ENCODE measurements at regions of chr1 and their contacts with region 1.

Region 1: DNA sequence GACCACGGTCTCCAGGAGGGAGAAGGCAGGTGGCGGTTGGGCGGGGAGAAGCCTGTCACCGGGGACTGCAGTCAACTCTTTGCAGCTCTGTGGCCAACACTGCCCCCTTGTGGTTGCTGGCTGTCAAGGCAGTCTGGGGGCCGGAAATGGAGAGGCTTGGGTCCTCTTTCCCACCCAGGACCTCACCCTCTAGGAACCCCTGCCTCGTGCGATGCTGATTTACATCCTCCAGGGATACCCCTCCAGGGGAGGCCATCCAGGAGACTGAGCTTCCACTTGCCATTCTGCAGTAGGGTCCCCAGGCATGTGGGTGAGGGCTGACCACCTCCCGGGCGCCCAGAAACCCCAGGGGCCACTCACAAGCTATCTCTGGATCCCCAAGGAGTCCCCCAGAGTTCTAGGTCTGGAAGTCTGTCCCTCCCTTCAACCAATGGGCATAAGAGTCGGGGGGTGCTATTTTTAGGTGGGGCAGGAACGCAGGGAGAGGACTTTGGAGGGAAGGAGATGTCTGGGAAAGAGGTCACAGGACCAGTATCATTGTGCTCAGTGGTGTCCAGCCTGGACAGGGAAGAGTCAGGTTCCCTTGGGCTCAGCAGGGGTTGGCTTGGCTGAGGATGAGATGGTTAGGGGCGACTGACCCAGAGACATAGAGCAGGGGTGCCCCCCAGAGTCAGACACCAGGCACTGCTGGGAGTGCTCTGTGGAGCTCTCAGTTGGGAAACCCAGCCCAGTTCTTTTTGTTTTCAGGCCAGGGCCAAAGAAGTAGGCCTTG is 7.1 kb upstream of the GPR61 start:
- DNase-seq: peak; percentile 96
- H3K4me3 Mint-ChIP-seq: peak overlapping the region; percentile 57
- H3K27ac Mint-ChIP-seq: peak overlapping the region; percentile 81
- H3K4me1 Mint-ChIP-seq: peaks cover 22% of the 10 kb centered on the region
- H3K27me3 Mint-ChIP-seq: no peaks in the 10 kb centered on the region

Region 2: DNA sequence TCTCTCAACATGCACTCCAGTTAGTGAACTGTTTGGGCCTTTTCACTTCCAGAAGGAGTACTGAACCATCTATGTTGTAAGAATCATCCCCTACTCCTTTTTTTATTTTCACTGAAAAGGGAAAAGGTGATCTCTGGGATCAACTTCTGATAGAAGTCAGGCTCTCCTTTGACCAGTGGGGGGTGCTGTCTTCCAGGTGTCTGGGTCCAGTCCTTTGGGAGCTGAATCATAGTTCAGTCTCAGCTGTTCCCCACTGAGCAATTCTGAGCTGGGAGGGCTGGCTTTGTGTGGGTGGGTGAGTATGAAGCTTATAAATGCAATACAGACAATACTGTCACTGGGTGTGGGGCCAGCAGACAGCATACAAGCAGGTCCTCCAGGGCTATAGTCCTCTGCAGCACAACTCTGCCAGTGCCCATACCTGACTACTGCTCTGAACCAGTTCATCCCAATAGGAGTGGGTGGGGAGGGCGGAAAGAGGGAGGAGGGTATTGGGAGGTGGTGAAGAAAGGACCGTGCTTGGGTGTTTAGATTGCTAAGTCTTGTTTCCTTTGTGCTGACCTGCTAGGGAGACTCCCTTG is 331.3 kb before region 1 on chr1:
- CTCF ChIA-PET with region 1: interaction called, 10 read pairs
- intact Hi-C with region 1: loop called (anchors 1 kb)
- DNase-seq: peak; percentile 86
- H3K4me3 Mint-ChIP-seq: no peak overlapping the region
- H3K27ac Mint-ChIP-seq: no peak overlapping the region
- H3K4me1 Mint-ChIP-seq: peaks cover 17% of the 10 kb centered on the region
- H3K27me3 Mint-ChIP-seq: no peaks in the 10 kb centered on the region

Region 3: DNA sequence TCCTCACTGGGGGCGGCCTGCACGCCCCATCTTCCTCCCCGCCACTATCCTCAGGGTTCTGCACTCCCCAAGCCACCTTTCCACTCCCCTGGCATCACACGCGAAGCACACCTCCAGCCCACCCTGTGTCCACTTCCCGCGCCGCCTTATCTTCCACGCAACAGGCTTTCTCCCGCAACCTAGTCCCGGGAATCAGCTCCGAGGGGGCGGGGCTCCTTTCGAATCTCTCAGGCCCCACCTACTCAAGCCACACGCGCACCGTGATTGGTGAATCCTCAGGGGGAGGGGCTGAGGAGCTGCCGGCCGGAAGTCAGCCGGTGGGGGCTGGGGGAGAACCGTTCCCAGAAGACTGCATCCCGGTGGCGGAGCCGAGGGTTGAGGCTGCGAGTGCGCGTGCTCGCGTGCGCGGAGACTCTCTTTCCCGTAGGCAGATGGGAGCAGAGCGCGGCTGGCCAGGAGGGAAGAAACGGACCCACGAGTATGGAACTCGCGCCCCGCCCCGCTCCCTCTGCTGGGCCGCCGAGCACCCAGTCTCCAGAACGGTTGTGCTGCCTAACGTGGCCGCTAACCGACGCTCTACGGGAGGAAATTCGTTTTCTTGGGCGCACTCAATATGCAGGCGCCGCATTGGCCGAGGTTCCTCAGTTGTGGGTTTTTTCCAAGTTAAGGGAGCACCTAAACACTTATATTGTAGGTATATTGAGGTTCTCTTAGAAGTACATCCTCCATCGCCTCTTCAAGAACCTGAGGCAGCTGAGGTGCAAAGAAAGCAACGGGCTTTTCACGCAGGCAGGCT is 249.4 kb before region 1 on chr1 and contains the start of gene PSRC1:
- CTCF ChIA-PET with region 1: interaction called, 42 read pairs
- intact Hi-C with region 1: no loop called
- DNase-seq: peak; percentile 94
- H3K4me3 Mint-ChIP-seq: peak within 1 kb of the TSS; percentile 94
- H3K27ac Mint-ChIP-seq: peak within 1 kb of the TSS; percentile 89
- H3K4me1 Mint-ChIP-seq: peaks cover 6% of the 10 kb centered on the region
- H3K27me3 Mint-ChIP-seq: no peaks in the 10 kb centered on the region
- total RNA-seq, gene PSRC1: 19.3 to 21.5 TPM

Region 4: DNA sequence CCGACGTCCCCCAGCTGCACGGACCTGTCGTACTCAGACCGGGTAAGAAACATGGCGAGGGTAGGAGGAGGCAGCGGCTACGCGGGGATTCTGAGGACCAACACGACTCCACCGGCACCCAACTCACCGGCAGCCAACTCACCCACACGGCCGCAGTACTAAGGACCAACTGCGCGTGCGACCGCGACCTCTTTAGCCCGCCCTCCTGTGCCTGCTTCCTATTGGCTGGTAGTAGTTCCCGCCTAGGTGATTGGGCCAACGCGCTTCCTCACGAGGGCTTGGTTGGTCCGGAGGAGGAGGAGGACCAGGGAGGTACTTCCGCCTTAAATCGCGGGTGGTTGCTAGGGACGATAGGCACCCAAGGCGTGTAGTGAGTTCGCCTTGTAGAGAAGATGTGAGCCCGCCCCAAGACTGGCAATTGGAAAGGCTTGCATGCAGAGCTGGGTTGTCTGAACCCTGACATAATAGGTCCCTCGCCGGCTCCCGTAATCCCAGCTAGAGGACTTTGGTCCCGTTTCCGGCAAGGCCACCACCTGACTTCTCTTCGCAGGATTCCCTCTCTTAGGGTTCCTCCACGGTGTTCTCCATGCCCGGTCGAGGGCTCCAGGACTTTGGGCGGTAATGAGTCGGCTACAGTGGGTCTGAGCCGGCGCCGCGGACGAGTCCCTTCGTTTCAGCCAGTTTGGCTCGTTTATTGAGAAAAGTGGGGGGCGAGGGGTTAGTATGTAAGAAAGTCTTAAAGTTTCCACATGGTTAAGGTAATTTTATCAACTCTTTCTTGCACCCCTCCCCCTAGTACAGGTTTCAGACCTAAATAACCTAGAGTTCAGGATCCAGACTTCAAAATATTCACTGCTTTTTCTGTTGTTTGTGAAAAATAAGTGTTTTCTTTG is 106.0 kb before region 1 on chr1 and contains the start of gene PSMA5:
- CTCF ChIA-PET with region 1: interaction called, 34 read pairs
- intact Hi-C with region 1: loop called (anchors 1 kb)
- DNase-seq: peak; percentile 98
- H3K4me3 Mint-ChIP-seq: peak within 1 kb of the TSS; percentile 94
- H3K27ac Mint-ChIP-seq: peak within 1 kb of the TSS; percentile 97
- H3K4me1 Mint-ChIP-seq: peaks cover 33% of the 10 kb centered on the region
- H3K27me3 Mint-ChIP-seq: no peaks in the 10 kb centered on the region
- total RNA-seq, gene PSMA5: 181 to 202 TPM

Region 5: DNA sequence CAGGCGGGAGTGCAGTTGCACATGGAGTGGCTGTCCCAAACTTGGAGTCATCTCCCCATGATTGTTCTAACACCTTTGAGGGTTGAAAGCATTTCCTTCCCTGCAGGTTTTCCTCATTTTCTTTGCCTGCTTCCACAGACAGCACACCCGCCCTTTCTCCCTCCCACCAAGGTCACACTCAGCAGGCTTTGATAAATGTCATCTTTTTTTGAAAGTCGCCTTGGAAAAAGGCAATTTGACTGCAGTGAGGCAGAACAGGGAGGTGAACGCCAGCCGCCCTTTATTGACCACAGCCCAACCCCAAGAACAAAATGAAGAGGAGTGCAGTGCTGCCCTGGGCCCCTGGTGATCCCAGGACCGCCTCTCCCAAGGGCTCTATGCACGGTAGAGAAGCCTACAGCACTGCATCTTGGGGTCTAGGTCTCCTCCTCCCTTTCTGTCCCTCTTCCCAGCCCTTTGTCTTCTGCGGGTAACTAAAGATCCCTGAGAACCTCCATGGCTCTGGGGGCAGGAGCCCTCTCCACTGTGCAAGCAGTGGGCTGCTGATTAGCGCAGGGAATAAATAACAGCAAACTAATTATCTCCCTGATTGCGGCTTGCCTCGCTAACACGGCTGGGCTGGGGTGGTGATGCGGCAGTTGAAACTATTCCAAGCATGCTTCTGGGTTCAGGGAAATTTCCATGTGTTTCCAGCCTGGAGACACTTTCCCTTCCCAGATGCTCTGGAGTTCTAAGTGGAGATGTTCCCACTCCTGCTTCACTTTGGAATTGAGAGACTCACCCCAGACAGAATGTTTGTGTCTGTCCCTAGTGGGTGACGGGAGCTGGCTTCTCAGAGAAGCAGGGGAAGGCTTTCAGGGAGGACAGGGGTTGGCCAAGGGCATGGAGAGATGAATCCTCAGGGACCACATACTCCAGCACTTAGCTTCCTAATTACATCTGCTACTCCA is 11.3 kb before region 1 on chr1:
- CTCF ChIA-PET with region 1: interaction called, 1,207 read pairs
- intact Hi-C with region 1: no loop called
- DNase-seq: no peak
- H3K4me3 Mint-ChIP-seq: no peak overlapping the region
- H3K27ac Mint-ChIP-seq: no peak overlapping the region
- H3K4me1 Mint-ChIP-seq: no peaks in the 10 kb centered on the region
- H3K27me3 Mint-ChIP-seq: no peaks in the 10 kb centered on the region